Activated T-helper 1 cell treated with anti-CD3 and anti-CD28 coated beads, Interleukin-12 subunit alpha, Interleukin-12 subunit beta, Interleukin-2, Interleukin-4 antibody, amounts not matched to agents 30 ng/mL and 10 ng/mL and 1 ng/mL, durations not matched to agents 14 hours and 24 hours and 36 hours (primary cell): ENCODE measurements at regions of chr5 and their contacts with region 1.

Region 1: GRCh38 chr5:109409844-109410388 is at the start of gene PJA2:
- DNase-seq: peak; percentile 96
- H3K4me3 Mint-ChIP-seq: peak within 1 kb of the TSS; percentile 92
- H3K27ac Mint-ChIP-seq: peak within 1 kb of the TSS; percentile 97
- H3K4me1 Mint-ChIP-seq: peaks cover 57% of the 10 kb centered on the region
- H3K27me3 Mint-ChIP-seq: no peaks in the 10 kb centered on the region
- total RNA-seq, gene PJA2: 40.2 and 41.4 TPM in 2 replicates

Region 2: DNA sequence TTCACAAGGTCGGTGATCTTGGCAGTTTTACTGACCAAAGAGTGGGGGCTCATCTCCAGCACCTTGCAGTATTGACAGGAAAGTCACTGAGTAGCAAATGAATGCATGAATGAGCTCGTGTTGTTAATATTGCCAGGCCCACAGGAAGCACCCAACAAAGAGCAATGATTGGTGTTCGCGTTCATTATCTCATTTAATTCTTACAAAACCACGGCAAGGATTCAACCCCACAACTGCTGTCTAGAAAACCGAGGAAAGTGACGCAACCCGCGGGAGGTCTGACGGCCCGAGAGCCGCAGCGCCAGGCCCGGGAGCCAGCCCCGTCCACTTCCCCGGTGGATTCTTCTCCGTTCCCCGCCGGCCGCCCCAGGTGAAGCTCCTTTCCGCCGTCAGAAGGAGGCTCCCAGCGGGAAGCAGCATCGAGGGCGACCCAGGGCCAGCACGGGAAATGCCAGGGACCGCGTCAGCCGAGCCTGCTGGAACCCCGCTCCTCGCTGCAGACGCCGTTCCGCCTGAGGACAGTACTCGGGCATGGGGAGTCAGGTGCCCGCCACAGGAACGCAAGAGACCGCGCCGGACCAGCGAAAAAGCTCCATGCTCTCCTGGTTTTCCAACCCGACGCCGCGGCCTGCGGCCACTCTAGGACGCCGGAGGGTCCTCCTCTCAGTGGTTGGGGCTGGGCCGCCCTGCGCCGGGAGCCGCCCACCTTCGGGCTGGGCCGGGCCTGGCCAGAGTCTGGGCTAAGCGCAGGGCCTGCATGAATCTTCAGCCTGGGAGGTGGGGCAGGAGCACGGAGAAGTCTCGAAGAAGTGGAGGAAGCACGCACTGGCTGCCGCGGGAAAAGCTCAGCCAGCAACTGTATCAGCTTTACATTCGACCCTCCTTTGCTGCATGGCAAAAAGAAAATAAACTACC is 682.0 kb before region 1 on chr5:
- intact Hi-C with region 1: loop called (anchors 1 kb)
- DNase-seq: no peak
- H3K4me3 Mint-ChIP-seq: peak overlapping the region; percentile 72
- H3K27ac Mint-ChIP-seq: peak overlapping the region; percentile 6
- H3K4me1 Mint-ChIP-seq: peaks cover 15% of the 10 kb centered on the region
- H3K27me3 Mint-ChIP-seq: peaks cover 67% of the 10 kb centered on the region

Region 3: GRCh38 chr5:109378095-109378494 is 31.8 kb before region 1 on chr5:
- intact Hi-C with region 1: loop called (anchors 2 kb)
- DNase-seq: no peak
- H3K4me3 Mint-ChIP-seq: no peak overlapping the region
- H3K27ac Mint-ChIP-seq: no peak overlapping the region
- H3K4me1 Mint-ChIP-seq: peaks cover 10% of the 10 kb centered on the region
- H3K27me3 Mint-ChIP-seq: no peaks in the 10 kb centered on the region

Region 4: GRCh38 chr5:109468737-109469420 is 59.0 kb after region 1 on chr5:
- intact Hi-C with region 1: loop called (anchors 1 kb)
- DNase-seq: peak; percentile 37
- H3K4me3 Mint-ChIP-seq: no peak overlapping the region
- H3K27ac Mint-ChIP-seq: no peak overlapping the region
- H3K4me1 Mint-ChIP-seq: no peaks in the 10 kb centered on the region
- H3K27me3 Mint-ChIP-seq: peaks cover 6% of the 10 kb centered on the region

Region 5: DNA sequence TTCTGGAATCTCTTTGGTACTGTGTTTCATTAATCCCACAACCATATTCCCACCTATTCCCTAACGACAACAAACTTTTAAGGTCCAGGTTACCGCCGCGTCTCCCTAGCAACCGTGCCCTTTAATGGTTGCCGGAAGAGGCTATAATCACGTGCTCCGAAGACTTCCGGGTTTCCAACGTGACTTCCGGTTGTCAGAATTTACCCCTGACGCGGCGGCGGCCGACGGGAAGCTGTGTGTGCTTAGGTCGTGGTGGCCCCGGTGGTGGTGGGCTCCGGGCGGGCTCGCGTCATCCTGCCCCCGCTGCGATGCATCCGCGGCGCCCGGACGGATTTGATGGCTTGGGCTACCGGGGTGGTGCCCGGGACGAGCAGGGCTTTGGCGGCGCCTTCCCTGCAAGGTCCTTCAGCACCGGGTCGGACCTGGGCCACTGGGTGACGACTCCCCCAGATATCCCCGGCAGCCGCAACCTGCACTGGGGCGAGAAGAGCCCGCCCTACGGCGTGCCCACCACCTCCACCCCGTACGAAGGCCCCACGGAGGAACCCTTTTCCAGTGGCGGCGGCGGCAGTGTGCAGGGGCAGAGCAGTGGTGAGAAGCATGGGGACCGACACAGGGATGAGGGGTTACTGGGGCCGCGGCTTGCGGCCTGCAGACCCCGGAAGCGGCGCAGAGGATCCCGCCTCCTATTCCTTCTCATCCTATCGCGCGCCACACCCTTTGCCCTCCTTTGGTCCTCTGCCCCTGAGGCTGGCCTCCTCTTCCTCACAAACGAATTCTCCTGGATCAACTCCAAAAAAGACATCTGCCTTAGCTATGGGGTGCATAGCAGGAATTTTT is 1329.1 kb after region 1 on chr5 and contains the start of gene SLC25A46:
- intact Hi-C with region 1: loop called (anchors 1 kb)
- DNase-seq: peak; percentile 85
- H3K4me3 Mint-ChIP-seq: peak within 1 kb of the TSS; percentile 97
- H3K27ac Mint-ChIP-seq: peak within 1 kb of the TSS; percentile 96
- H3K4me1 Mint-ChIP-seq: peaks cover 39% of the 10 kb centered on the region
- H3K27me3 Mint-ChIP-seq: peaks cover 11% of the 10 kb centered on the region
- total RNA-seq, gene SLC25A46: 54.6 and 55.4 TPM in 2 replicates